CD8-positive, alpha-beta T cell (primary cell): ENCODE measurements at regions of chr17 and their contacts with region 1.

Region 1: DNA sequence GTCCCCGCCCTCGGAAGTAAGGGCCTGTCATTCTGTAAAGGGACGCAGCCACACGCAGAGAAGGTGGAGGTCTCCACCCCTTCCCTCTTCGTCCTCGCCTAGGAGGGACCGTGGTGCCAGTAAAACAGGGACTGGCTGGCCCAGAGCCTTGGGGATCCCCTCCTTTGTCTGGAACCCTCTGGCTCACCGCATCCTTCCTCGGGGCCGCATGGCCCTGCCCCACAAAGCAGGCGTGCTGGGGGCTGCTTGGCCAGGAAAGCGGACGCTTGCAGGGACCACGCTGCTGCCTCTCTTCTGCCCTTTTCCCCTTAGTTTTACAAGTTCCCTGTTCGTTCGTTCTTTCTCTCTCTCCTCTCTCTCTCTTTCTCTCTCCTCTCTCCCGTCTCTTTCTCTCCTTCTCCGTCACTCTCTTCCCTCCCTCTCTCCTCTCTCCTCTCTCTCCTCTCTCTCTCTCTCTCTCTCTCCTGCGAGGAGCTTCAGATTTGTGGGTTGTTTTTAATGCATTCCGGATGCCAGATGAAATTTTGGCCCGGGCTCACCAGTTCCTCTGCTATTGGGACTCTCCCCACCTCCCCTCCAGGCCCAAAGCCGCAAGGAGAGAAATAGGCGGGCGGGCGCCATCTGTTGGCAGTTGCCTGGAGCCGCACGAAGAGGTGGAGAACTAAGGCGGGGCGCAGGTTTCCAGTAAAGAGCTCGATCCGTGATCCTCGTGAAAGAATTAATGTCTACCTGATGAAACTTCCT is 35.1 kb upstream of the CDRT4 start:
- DNase-seq: peak; percentile 32 to 71 (median 61)
- ATAC-seq: peak; percentile 78
- H3K4me3 ChIP-seq: no peak overlapping the region
- H3K4me3 Mint-ChIP-seq: no peak overlapping the region
- H3K27ac ChIP-seq: no peak overlapping the region
- H3K27ac Mint-ChIP-seq: no peak overlapping the region
- H3K4me1 ChIP-seq: peaks cover 6% of the 10 kb centered on the region
- H3K4me1 Mint-ChIP-seq: peaks cover 9% of the 10 kb centered on the region
- H3K27me3 ChIP-seq: no peaks in the 10 kb centered on the region
- H3K27me3 Mint-ChIP-seq: no peaks in the 10 kb centered on the region
- CTCF ChIP-seq: peak; percentile 68

Region 2: GRCh38 chr17:15257258-15257788 is 245.2 kb before region 1 on chr17:
- CTCF ChIA-PET with region 1: interaction called, 45 read pairs
- POLR2A ChIA-PET with region 1: no interaction called
- intact Hi-C with region 1: loop called in 1 of 2 experiments (anchors 1 kb)
- DNase-seq: peak; percentile 14 to 74 (median 48)
- ATAC-seq: peak; percentile 55
- H3K4me3 ChIP-seq: no peak overlapping the region
- H3K4me3 Mint-ChIP-seq: no peak overlapping the region
- H3K27ac ChIP-seq: no peak overlapping the region
- H3K27ac Mint-ChIP-seq: no peak overlapping the region
- H3K4me1 ChIP-seq: peaks cover 11% of the 10 kb centered on the region
- H3K4me1 Mint-ChIP-seq: peaks cover 20% of the 10 kb centered on the region
- H3K27me3 ChIP-seq: peaks cover 2 to 9% of the 10 kb centered on the region in 2 experiments
- H3K27me3 Mint-ChIP-seq: peaks cover 60% of the 10 kb centered on the region
- CTCF ChIP-seq: peak; percentile 80

Region 3: DNA sequence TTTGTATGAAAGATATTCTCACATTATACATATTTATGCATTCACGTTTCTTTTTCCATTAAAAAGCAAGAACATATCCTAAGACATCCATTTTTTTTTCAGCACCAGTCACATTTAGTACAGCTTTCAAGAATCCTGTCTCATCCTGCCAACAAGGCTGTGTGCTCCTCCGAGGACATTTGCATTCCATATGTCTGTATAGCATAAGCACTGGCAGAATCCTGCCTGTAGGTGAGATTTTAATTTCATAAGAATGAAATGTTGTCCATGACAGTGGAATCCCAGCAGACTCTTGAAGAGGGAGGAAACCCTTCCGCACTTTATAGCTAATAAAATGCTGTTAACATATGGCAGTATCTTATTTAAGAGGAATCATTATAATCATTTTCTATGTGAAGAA is 234.5 kb before region 1 on chr17:
- CTCF ChIA-PET with region 1: no interaction called
- POLR2A ChIA-PET with region 1: no interaction called
- intact Hi-C with region 1: no loop called
- DNase-seq: no peak
- ATAC-seq: no peak
- H3K4me3 ChIP-seq: no peak overlapping the region
- H3K4me3 Mint-ChIP-seq: no peak overlapping the region
- H3K27ac ChIP-seq: no peak overlapping the region
- H3K27ac Mint-ChIP-seq: no peak overlapping the region
- H3K4me1 ChIP-seq: no peaks in the 10 kb centered on the region
- H3K4me1 Mint-ChIP-seq: peaks cover 4% of the 10 kb centered on the region
- H3K27me3 ChIP-seq: no peaks in the 10 kb centered on the region
- H3K27me3 Mint-ChIP-seq: peaks cover 34% of the 10 kb centered on the region
- CTCF ChIP-seq: no peak

Region 4: DNA sequence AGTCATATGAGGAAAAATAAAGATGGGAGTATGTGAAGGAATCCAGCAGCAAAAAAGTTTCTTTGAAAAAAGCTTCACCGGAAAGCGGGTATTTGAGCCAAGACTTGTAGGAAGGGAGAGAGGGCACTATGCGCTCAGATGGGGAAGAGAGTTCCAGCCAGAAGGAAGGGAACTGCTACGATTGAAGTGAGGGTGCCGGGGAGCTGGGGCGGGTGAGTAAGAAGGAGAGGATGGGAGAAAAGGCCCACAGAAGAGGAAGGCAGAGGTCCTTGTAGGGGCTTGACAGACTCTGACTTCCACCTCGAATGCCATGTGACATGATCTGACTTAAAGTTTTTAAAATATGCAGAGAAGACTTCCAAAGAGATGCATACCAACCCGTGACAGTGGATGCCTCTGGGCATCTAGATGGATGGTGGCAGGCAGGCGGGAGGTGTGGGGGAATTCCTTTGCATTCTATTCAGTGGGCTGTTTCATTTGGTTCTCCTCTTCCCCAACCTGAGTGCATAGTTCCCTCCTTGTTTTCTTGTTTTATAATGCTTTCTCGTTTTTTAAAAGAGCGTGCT is 80.1 kb before region 1 on chr17:
- CTCF ChIA-PET with region 1: no interaction called
- POLR2A ChIA-PET with region 1: no interaction called
- intact Hi-C with region 1: loop called in 1 of 2 experiments (anchors 5 kb)
- DNase-seq: no peak
- ATAC-seq: no peak
- H3K4me3 ChIP-seq: no peak overlapping the region
- H3K4me3 Mint-ChIP-seq: no peak overlapping the region
- H3K27ac ChIP-seq: no peak overlapping the region
- H3K27ac Mint-ChIP-seq: no peak overlapping the region
- H3K4me1 ChIP-seq: no peaks in the 10 kb centered on the region
- H3K4me1 Mint-ChIP-seq: no peaks in the 10 kb centered on the region
- H3K27me3 ChIP-seq: no peaks in the 10 kb centered on the region
- H3K27me3 Mint-ChIP-seq: peaks cover 4% of the 10 kb centered on the region
- CTCF ChIP-seq: no peak

Region 5: DNA sequence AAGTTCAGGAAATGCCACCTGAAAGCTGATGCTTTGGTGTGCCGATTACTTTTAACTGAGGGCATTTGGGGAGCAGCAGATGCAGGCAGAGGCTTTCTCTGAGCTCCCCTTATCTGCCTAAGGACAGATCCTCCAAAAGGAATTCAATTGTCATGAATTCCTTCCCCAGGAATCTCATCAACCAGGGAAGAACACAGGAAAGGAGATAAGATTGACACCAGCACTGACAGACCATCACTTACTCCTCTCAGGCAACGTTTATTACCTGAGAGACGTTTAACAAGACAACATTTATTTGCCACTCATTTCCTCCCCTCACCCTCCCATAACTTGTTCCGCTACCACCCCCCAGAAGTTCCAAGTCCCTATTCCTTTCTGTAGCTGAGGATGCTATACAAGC is 17.5 kb before region 1 on chr17:
- CTCF ChIA-PET with region 1: interaction called, 10 read pairs
- POLR2A ChIA-PET with region 1: no interaction called
- intact Hi-C with region 1: no loop called
- DNase-seq: no peak
- ATAC-seq: no peak
- H3K4me3 ChIP-seq: no peak overlapping the region
- H3K4me3 Mint-ChIP-seq: no peak overlapping the region
- H3K27ac ChIP-seq: no peak overlapping the region
- H3K27ac Mint-ChIP-seq: no peak overlapping the region
- H3K4me1 ChIP-seq: no peaks in the 10 kb centered on the region
- H3K4me1 Mint-ChIP-seq: no peaks in the 10 kb centered on the region
- H3K27me3 ChIP-seq: no peaks in the 10 kb centered on the region
- H3K27me3 Mint-ChIP-seq: no peaks in the 10 kb centered on the region
- CTCF ChIP-seq: no peak

Region 6: GRCh38 chr17:15914400-15915170 is 412.0 kb after region 1 on chr17:
- CTCF ChIA-PET with region 1: no interaction called
- POLR2A ChIA-PET with region 1: no interaction called
- intact Hi-C with region 1: no loop called
- DNase-seq: peak in 1 of 9 experiments; percentile 49
- ATAC-seq: no peak
- H3K4me3 ChIP-seq: no peak overlapping the region
- H3K4me3 Mint-ChIP-seq: no peak overlapping the region
- H3K27ac ChIP-seq: peak overlapping the region in 1 of 2 experiments; percentile 34
- H3K27ac Mint-ChIP-seq: no peak overlapping the region
- H3K4me1 ChIP-seq: no peaks in the 10 kb centered on the region
- H3K4me1 Mint-ChIP-seq: no peaks in the 10 kb centered on the region
- H3K27me3 ChIP-seq: no peaks in the 10 kb centered on the region
- H3K27me3 Mint-ChIP-seq: peaks cover 2% of the 10 kb centered on the region
- CTCF ChIP-seq: no peak